ENCODE measurements at regions of chr9 and their contacts with region 1.

Region 1: GRCh38 chr9:133742849-133743444 is 4.8 kb upstream of the SARDH start:
- DNase-seq: peak; percentile 89
- CTCF ChIP-seq: peak; percentile 97

Region 2: DNA sequence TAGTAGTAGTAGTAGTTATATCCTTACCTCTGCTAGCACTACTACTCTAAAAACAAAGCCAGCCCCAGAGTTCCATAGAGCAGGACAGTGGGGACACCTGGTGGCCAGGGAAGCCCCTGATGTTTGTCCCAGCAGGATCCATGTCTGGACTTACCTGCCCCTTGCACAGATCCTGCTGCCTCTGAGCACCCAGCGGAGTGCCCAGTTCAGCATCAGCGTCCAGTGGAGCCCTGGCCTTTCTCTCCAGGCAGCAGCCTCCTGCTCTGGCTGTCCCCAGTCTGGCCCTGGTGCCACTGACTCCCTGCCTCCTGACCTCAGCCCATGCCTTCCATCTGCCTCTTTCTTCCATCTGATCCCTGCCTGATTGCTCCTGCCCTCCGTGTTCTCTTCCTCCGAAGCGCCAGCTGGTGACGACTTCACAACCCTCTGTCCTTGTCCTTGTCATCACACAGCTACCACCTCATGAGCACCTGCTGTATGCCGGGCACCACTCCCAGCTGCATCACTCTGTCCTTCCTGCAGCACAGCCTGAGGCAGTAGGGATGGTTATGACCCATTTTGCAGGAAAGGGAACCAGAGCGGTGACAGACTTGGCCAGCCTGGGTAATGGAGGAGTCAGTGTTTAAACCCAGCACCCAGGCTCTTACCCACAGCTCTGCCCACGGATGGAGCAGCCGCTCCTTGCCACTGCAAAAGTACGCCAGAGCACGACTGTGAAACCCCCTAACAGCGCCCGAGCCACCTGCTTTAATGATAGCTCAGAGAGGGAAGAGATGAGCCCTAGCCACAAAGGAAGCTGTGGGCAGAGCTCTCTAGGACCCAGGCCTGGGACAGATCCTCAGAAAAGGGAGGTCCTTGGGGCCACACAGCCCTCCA is 16.3 kb before region 1 on chr9:
- CTCF ChIA-PET with region 1: interaction called, 19 read pairs
- POLR2A ChIA-PET with region 1: no interaction called
- DNase-seq: peak; percentile 66
- CTCF ChIP-seq: peak; percentile 49

Region 3: GRCh38 chr9:133731876-133732638 is 10.9 kb before region 1 on chr9:
- CTCF ChIA-PET with region 1: interaction called, 19 read pairs
- POLR2A ChIA-PET with region 1: no interaction called
- DNase-seq: no peak
- CTCF ChIP-seq: no peak

Region 4: GRCh38 chr9:133768859-133769425 is 26.0 kb after region 1 on chr9:
- CTCF ChIA-PET with region 1: interaction called, 10 read pairs
- POLR2A ChIA-PET with region 1: no interaction called
- DNase-seq: no peak
- CTCF ChIP-seq: no peak

Region 5: DNA sequence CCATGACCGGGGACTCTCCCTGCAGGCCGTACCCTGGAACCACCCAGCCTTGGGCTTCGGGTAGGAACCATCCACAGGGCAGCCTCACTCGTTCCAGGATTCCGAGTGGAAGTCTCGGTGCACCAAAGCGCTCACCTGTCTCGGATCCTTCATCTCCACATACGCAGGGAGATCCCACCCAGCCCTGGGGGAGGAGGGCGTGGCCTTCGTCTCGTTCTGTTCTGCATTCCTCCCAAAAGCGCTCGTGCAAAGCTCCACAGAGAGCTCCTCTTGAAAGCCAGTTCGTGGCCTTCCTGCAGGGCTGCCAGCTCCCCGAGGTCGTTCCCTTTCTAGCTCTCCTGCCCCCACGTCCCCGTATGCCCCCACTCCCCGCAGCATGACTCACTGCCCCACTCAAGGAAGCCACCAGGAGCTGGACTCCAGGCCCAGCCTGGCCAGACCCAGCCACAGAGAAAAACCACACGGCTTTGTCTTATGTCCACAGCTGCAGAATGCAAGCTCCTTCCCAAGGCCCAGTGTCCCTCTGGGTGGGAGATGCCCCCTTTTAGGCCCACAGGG is 60.2 kb after region 1 on chr9:
- CTCF ChIA-PET with region 1: no interaction called
- POLR2A ChIA-PET with region 1: no interaction called
- DNase-seq: no peak
- CTCF ChIP-seq: no peak

Region 6: DNA sequence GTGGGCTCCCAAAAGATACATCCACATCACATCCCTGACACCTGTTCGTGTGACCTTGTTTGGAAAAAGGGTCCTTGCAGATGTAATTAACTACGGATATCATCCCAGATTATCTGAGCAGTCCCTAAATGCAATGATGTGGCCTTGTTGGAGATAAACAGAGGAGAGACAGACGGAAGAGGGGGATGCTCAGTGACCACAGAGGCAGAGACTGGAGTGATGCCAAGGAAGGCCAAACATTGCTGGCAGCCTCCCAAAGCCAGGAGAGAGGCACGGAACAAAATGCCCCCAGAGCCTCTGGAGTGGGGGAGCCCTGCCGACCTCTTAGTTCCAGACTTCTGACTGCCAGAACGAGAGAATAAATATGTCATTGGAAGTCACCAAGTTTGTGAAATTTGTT is 264.2 kb after region 1 on chr9:
- CTCF ChIA-PET with region 1: interaction called, 10 read pairs
- POLR2A ChIA-PET with region 1: interaction called, 5 read pairs
- DNase-seq: no peak
- CTCF ChIP-seq: no peak